ENCODE measurements at regions of chr21 and their contacts with region 1.

Region 1: GRCh38 chr21:34986561-34987500 is 62.3 kb downstream of the RUNX1 start:
- DNase-seq: peak; percentile 37 to 87 (median 64)
- ATAC-seq: peak; percentile 68
- H3K4me3 ChIP-seq: peak overlapping the region; percentile 17
- H3K4me3 Mint-ChIP-seq: peak overlapping the region; percentile 84
- H3K27ac ChIP-seq: peak overlapping the region; percentile 54 to 74
- H3K27ac Mint-ChIP-seq: no peak overlapping the region
- H3K4me1 ChIP-seq: peaks cover 96% of the 10 kb centered on the region
- H3K4me1 Mint-ChIP-seq: peaks cover 93% of the 10 kb centered on the region
- H3K27me3 ChIP-seq: no peaks in the 10 kb centered on the region
- H3K27me3 Mint-ChIP-seq: no peaks in the 10 kb centered on the region
- CTCF ChIP-seq: no peak

Region 2: GRCh38 chr21:34933609-34934335 is 53.1 kb before region 1 on chr21:
- CTCF ChIA-PET with region 1: interaction called, 6 read pairs
- POLR2A ChIA-PET with region 1: interaction called, 20 read pairs
- intact Hi-C with region 1: loop called in 1 of 2 experiments (anchors 5 kb)
- DNase-seq: peak in 7 of 14 experiments; percentile 10 to 89 (median 35)
- ATAC-seq: peak; percentile 86
- H3K4me3 ChIP-seq: peak overlapping the region; percentile 39
- H3K4me3 Mint-ChIP-seq: peak overlapping the region; percentile 86
- H3K27ac ChIP-seq: peak overlapping the region; percentile 75 to 84
- H3K27ac Mint-ChIP-seq: peak overlapping the region; percentile 99
- H3K4me1 ChIP-seq: peaks cover 47% of the 10 kb centered on the region
- H3K4me1 Mint-ChIP-seq: peaks cover 92% of the 10 kb centered on the region
- H3K27me3 ChIP-seq: no peaks in the 10 kb centered on the region
- H3K27me3 Mint-ChIP-seq: no peaks in the 10 kb centered on the region
- CTCF ChIP-seq: no peak

Region 3: GRCh38 chr21:34967509-34968289 is 19.1 kb before region 1 on chr21:
- CTCF ChIA-PET with region 1: interaction called, 8 read pairs
- POLR2A ChIA-PET with region 1: interaction called, 3 read pairs
- intact Hi-C with region 1: loop called in 1 of 2 experiments (anchors 2 kb)
- DNase-seq: peak in 3 of 14 experiments; percentile 25 to 60 (median 50)
- ATAC-seq: peak; percentile 43
- H3K4me3 ChIP-seq: no peak overlapping the region
- H3K4me3 Mint-ChIP-seq: peak overlapping the region; percentile 64
- H3K27ac ChIP-seq: peak overlapping the region in 1 of 2 donors; percentile 7
- H3K27ac Mint-ChIP-seq: peak overlapping the region; percentile 86
- H3K4me1 ChIP-seq: peaks cover 82% of the 10 kb centered on the region
- H3K4me1 Mint-ChIP-seq: peaks cover 95% of the 10 kb centered on the region
- H3K27me3 ChIP-seq: no peaks in the 10 kb centered on the region
- H3K27me3 Mint-ChIP-seq: no peaks in the 10 kb centered on the region
- CTCF ChIP-seq: no peak

Region 4: DNA sequence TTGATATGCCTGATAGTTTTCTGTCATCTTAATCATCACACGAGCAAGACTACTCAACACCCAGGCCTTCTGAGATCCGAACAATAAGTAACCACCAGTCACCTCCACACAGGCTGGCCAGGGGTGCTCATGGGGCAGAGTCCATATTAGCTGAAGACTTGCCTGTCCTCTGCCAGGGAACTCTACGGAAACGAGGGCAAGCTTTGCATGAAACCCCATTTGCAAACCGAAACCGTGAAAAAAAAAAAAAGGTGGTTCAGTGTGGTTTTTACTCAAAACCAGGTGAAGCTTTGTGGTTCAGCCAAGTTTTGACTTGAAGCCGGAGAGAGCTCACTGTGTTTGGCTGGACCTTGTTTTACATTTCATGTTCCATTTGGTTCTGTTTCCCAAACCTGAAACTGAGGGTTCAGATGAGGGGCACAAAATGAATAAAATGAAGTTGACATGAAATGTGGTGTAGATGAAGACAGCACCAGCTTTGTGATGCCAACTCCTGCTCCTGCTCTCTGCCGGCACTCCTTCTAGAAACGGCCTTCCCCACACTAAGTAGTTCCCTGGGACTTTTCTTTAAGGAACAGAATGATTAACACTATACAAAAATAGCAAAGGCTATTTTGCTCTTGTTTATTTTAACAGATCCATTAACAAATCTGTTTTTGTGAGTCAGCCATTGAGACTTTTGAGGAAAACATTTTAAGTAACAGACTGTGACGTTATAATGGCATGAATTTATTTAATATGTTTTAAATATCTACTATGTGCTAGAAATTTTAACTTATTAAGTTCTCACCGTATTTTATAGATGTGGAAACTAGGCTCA is 12.5 kb before region 1 on chr21:
- CTCF ChIA-PET with region 1: interaction called, 8 read pairs
- POLR2A ChIA-PET with region 1: interaction called, 36 read pairs
- intact Hi-C with region 1: loop called in 1 of 2 experiments (anchors 2 kb)
- DNase-seq: peak in 11 of 14 experiments; percentile 18 to 87 (median 38)
- ATAC-seq: peak; percentile 85
- H3K4me3 ChIP-seq: peak overlapping the region; percentile 25
- H3K4me3 Mint-ChIP-seq: peak overlapping the region; percentile 88
- H3K27ac ChIP-seq: peak overlapping the region; percentile 29 to 36
- H3K27ac Mint-ChIP-seq: peak overlapping the region; percentile 92
- H3K4me1 ChIP-seq: peaks cover 47% of the 10 kb centered on the region
- H3K4me1 Mint-ChIP-seq: peaks cover 93% of the 10 kb centered on the region
- H3K27me3 ChIP-seq: no peaks in the 10 kb centered on the region
- H3K27me3 Mint-ChIP-seq: no peaks in the 10 kb centered on the region
- CTCF ChIP-seq: no peak

Region 5: GRCh38 chr21:35002879-35003722 is 16.3 kb after region 1 on chr21:
- CTCF ChIA-PET with region 1: interaction called, 3 read pairs
- POLR2A ChIA-PET with region 1: interaction called, 11 read pairs
- intact Hi-C with region 1: loop called in 1 of 2 experiments (anchors 2 kb)
- DNase-seq: no peak
- ATAC-seq: no peak
- H3K4me3 ChIP-seq: no peak overlapping the region
- H3K4me3 Mint-ChIP-seq: peak overlapping the region; percentile 8
- H3K27ac ChIP-seq: no peak overlapping the region
- H3K27ac Mint-ChIP-seq: peak overlapping the region; percentile 65
- H3K4me1 ChIP-seq: peaks cover 70% of the 10 kb centered on the region
- H3K4me1 Mint-ChIP-seq: peaks cover 98% of the 10 kb centered on the region
- H3K27me3 ChIP-seq: no peaks in the 10 kb centered on the region
- H3K27me3 Mint-ChIP-seq: no peaks in the 10 kb centered on the region
- CTCF ChIP-seq: no peak

Region 6: GRCh38 chr21:35020902-35021301 is 34.1 kb after region 1 on chr21:
- CTCF ChIA-PET with region 1: interaction called, 3 read pairs
- POLR2A ChIA-PET with region 1: interaction called, 27 read pairs
- intact Hi-C with region 1: loop called in 1 of 2 experiments (anchors 5 kb)
- DNase-seq: no peak
- ATAC-seq: no peak
- H3K4me3 ChIP-seq: no peak overlapping the region
- H3K4me3 Mint-ChIP-seq: peak overlapping the region; percentile 42
- H3K27ac ChIP-seq: no peak overlapping the region
- H3K27ac Mint-ChIP-seq: peak overlapping the region; percentile 87
- H3K4me1 ChIP-seq: peaks cover 81% of the 10 kb centered on the region
- H3K4me1 Mint-ChIP-seq: peaks cover 92% of the 10 kb centered on the region
- H3K27me3 ChIP-seq: no peaks in the 10 kb centered on the region
- H3K27me3 Mint-ChIP-seq: no peaks in the 10 kb centered on the region
- CTCF ChIP-seq: no peak

Measured in CD4-positive, alpha-beta T cell (primary cell).